Posterior cingulate gyrus (tissue), 11 donors: ENCODE measurements at regions of chr13 and their contacts with region 1.

Region 1: GRCh38 chr13:49495783-49496762 is at the start of gene PHF11:
- DNase-seq: peak; percentile 32 to 95 (median 61)

Region 2: DNA sequence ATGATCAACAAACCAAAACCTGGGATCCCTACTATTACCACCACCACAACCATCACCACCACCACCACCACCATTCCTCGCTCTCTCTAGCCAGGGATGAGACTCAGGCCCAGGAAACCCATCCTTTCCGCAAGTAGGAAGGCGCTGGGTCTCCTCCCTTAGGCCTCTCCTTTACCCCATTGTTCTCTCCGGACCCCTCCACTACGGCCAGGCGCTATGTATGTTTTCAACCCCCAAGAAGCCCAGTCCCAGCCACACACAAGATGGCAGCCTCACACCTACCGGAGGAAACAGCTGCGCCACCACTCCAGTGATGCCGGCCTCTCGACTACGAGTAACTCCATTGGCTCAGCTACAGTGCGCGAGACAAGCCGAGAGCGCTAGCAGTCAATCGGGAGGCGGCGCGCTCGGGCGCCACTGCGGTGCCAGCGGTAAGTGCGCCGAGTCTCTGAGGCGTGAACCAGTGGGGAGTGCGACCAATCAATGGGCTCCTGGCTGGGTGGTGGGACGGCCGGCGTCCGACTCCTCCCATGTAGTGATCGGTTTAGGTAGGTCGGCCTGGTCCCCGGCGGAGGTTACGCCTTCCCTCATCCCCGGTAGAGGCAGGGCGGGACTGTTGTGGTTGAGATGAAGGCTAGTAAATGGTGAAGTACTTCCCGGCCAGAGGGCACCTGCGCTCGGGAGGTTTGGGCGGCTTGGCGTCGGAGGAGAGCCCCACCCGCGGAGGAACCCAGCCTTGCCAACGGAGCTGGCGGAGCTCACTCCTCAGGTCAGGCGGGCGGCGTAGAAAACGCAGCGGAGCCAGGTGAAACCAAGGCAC is 52.2 kb before region 1 on chr13 and contains the starts of genes CAB39L and SETDB2:
- intact Hi-C with region 1: loop called (anchors 5 kb)
- DNase-seq: peak; percentile 96 to 100 (median 99)

Region 3: DNA sequence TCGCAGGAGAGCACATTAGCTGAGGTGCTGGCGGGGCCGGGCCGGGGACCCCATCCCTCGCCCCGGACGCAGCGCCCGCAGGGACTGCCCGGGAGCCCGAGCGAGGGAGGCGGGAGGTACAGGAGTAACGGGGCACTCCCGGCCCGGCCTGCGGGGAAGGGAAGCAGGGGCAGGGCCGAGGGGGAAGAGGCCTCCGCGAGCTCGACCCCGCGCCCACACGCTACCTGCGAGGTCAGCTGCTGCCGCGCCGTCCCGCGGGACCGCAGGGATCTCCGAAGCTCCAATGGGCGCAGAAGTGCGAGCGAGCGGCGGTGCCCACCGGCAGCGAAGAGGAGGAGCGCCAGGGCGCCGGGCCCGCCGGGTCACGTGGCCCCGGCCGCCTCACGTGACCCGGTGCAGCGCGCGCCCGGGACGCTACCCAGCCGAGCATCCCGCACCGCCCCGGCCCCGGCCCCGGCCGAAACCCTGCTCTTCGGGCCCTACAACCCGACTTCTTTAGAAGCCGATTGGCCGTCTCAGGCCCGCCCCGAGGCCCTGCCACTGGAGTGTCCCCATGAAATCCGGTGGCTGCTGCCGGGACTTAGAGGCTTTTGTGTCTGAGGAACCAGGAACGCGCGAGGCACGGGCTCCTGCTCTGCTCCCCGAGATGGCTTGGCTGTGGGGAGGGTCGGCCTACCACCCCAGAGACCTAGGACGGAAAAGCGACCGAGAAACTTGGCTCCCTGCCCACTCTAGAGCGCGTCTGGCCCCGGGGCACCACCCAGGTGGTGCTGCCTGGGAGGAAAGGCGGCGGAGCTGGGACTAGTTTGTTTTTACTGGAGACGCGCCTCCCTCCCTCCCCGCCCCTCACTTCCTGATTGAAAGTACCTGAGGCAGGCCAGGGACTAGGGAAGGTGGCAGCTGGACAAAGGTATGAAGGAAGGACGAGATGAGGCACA is 89.4 kb after region 1 on chr13 and contains the start of gene RCBTB1:
- intact Hi-C with region 1: loop called (anchors 10 kb)
- DNase-seq: peak; percentile 29 to 93 (median 54)

Region 4: GRCh38 chr13:49792550-49793324 is 296.7 kb after region 1 on chr13 and contains the start of gene KPNA3:
- intact Hi-C with region 1: no loop called
- DNase-seq: peak; percentile 88 to 99 (median 96)